ENCODE measurements at regions of chr16 and their contacts with region 1.

Region 1: GRCh38 chr16:82317411-82318167 is 147.6 kb upstream of the MPHOSPH6 start:
- DNase-seq: no peak
- ATAC-seq: peak; percentile 52
- H3K4me3 ChIP-seq: no peak overlapping the region
- H3K27ac ChIP-seq: peak overlapping the region in 1 of 2 donors; percentile 90
- H3K4me1 ChIP-seq: peaks cover 11% of the 10 kb centered on the region in 2 donors
- H3K27me3 ChIP-seq: no peaks in the 10 kb centered on the region

Region 2: DNA sequence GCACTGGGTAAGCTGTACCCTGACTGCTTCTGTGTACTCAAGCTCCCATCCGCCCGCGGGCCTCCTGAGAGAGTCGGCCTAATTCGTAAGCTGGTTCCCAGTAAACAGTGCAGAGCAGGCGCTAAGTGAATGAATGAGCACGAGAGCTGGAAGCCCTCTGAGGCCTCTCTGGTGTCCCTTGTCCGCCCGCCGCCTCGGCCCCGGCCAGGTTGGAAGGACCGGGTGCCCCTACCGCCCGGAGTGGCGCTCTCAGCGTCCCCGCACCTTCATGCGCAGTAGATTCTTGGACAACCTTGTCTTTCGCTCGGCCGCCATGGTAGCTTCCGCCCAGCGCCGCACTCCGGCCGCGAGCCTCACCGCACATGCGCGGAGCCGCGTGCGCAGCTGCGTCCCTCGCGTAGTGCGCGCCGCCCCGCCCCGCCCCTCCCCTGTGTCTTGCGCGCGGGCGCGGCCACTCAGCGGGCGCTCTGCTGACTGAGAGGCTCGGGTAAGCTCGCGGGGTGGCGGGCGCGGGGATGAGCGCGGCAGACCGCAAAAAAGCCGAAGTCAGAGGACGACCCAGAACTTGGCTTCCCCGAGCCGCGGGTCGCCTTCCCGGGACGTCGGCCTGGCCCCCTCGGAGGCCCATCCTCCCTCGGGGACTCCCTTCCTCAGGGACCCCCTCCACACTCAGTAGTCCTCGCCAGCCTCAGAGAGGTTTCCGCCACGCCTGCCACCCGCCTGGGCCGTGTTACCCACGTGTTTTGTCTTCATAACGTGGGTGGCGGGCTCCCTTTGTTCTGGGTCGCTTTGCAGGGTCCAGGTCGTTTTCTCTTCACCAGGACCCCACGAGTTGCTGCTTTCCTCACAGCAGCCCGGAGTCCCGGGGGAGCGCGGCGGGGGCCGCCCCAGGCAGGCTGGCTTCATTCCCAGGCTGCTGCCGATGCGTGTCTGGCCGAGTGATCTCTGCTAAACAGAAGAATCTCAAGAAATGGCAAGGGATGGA is 147.4 kb before region 1 on chr16 and contains the start of gene MPHOSPH6:
- intact Hi-C with region 1: no loop called
- DNase-seq: peak; percentile 93 to 97
- ATAC-seq: peak; percentile 99
- H3K4me3 ChIP-seq: peak within 1 kb of the TSS; percentile 57 to 63
- H3K27ac ChIP-seq: peak within 1 kb of the TSS in 1 of 2 donors; percentile 12
- H3K4me1 ChIP-seq: no peaks in the 10 kb centered on the region
- H3K27me3 ChIP-seq: no peaks in the 10 kb centered on the region
- total RNA-seq, gene MPHOSPH6: 10.2 to 20.4 TPM

Region 3: GRCh38 chr16:82280867-82281266 is 36.7 kb before region 1 on chr16:
- intact Hi-C with region 1: loop called in 1 of 2 experiments (anchors 5 kb)
- DNase-seq: no peak
- ATAC-seq: no peak
- H3K4me3 ChIP-seq: no peak overlapping the region
- H3K27ac ChIP-seq: peak overlapping the region; percentile 76 to 91
- H3K4me1 ChIP-seq: peaks cover 3 to 16% of the 10 kb centered on the region in 2 donors
- H3K27me3 ChIP-seq: no peaks in the 10 kb centered on the region

Region 4: DNA sequence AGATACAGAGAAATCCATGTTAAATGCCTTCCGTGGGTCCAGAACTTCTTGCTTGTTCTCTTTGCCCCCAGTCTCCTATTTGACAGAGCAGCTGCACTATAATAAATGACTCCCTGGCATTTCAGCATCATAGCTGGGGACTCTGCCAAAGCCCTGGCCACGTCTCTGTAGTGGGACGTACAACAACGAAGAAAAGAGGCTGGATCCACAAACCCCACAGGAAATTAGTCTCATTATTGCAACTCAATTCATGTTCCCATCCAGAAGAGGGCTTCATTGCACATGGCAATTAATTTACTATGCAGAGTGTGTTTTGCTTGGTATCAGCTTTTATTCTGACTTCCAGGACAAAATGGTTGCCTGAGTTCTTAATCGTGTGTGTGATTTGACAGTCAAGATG is 430.4 kb after region 1 on chr16:
- intact Hi-C with region 1: no loop called
- DNase-seq: peak; percentile 80 to 83
- ATAC-seq: peak; percentile 74
- H3K4me3 ChIP-seq: no peak overlapping the region
- H3K27ac ChIP-seq: no peak overlapping the region
- H3K4me1 ChIP-seq: peaks cover 2% of the 10 kb centered on the region in 2 donors
- H3K27me3 ChIP-seq: no peaks in the 10 kb centered on the region

Measured in aorta (tissue), 5 donors.